Common myeloid progenitor, CD34-positive (primary cell): ENCODE measurements at regions of chr1 and their contacts with region 1.

Region 1: DNA sequence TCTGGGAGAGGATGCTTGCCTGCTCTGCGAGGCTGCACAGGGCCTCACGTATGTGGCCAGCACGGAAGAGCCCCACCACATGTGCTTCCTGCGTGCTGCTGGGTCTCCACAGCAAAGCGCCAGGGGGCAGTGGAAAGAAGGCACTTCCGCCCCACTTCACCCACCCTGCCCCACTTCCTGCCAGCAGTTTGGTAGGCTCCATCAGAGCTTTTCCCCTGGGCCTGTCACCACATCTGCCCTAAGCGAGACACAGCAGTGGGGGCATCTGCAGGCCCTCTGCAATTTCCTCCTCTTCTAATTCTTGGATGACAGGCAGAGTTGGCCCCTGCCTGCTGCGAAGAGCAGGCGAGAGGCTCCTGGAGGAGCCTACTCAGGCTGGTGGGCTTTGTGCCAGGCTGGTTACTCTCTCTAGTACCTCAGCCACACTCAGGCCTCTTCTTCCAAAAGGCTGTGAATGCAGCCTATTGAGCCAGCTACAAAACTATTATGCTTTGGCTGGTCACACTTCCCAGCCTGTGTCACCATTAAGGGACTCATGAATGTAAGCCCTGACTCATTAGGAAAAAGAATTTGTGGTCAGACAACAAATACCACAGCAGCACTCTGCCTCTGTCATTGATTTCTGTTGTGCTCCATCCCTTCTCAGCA is 25.0 kb downstream of the CD244 start:
- DNase-seq: peak; percentile 94 to 99 (median 98)
- H3K4me3 ChIP-seq: peak overlapping the region in 3 of 7 experiments; percentile 32 to 40 (median 37)
- H3K27ac ChIP-seq: peak overlapping the region; percentile 65 to 80
- H3K4me1 ChIP-seq: peaks cover 38 to 77% (median 72%) of the 10 kb centered on the region in 4 experiments
- H3K27me3 ChIP-seq: no peaks in the 10 kb centered on the region

Region 2: GRCh38 chr1:160108888-160109662 is 728.6 kb before region 1 on chr1:
- CTCF ChIA-PET with region 1: no interaction called
- POLR2A ChIA-PET with region 1: no interaction called
- DNase-seq: peak; percentile 38 to 73 (median 68)
- H3K4me3 ChIP-seq: no peak overlapping the region
- H3K27ac ChIP-seq: no peak overlapping the region
- H3K4me1 ChIP-seq: peaks cover 0 to 8% (median 0%) of the 10 kb centered on the region in 4 experiments
- H3K27me3 ChIP-seq: no peaks in the 10 kb centered on the region

Region 3: GRCh38 chr1:160862203-160863060 is 24.8 kb after region 1 on chr1 and contains the start of gene CD244:
- CTCF ChIA-PET with region 1: interaction called, 385 read pairs
- POLR2A ChIA-PET with region 1: interaction called, 17 read pairs
- DNase-seq: peak; percentile 89 to 99 (median 98)
- H3K4me3 ChIP-seq: peak within 1 kb of the TSS; percentile 19 to 74 (median 64)
- H3K27ac ChIP-seq: peak within 1 kb of the TSS; percentile 71 to 89
- H3K4me1 ChIP-seq: peaks cover 22 to 72% (median 68%) of the 10 kb centered on the region in 4 experiments
- H3K27me3 ChIP-seq: no peaks in the 10 kb centered on the region

Region 4: GRCh38 chr1:160868141-160868540 is 30.5 kb after region 1 on chr1:
- CTCF ChIA-PET with region 1: interaction called, 385 read pairs
- POLR2A ChIA-PET with region 1: interaction called, 17 read pairs
- DNase-seq: peak in 2 of 3 donors; percentile 58 to 80
- H3K4me3 ChIP-seq: no peak overlapping the region
- H3K27ac ChIP-seq: no peak overlapping the region
- H3K4me1 ChIP-seq: peaks cover 2 to 39% (median 25%) of the 10 kb centered on the region in 4 experiments
- H3K27me3 ChIP-seq: no peaks in the 10 kb centered on the region

Region 5: GRCh38 chr1:160884579-160884978 is 46.9 kb after region 1 on chr1:
- CTCF ChIA-PET with region 1: interaction called, 90 read pairs
- POLR2A ChIA-PET with region 1: interaction called, 3 read pairs
- DNase-seq: no peak
- H3K4me3 ChIP-seq: no peak overlapping the region
- H3K27ac ChIP-seq: no peak overlapping the region
- H3K4me1 ChIP-seq: peaks cover 0 to 5% (median 3%) of the 10 kb centered on the region in 4 experiments
- H3K27me3 ChIP-seq: no peaks in the 10 kb centered on the region